CD8-positive, alpha-beta memory T cell (primary cell): ENCODE measurements at regions of chr17 and their contacts with region 1.

Region 1: GRCh38 chr17:40542558-40543411 is 22.5 kb downstream of the CCR7 start:
- DNase-seq: peak in 3 of 5 donors; percentile 33 to 64 (median 44)
- H3K4me3 ChIP-seq: peak overlapping the region; percentile 54
- H3K4me3 Mint-ChIP-seq: peak overlapping the region; percentile 77 to 86 (median 84)
- H3K27ac ChIP-seq: peak overlapping the region; percentile 72
- H3K27ac Mint-ChIP-seq: peak overlapping the region; percentile 95 to 100 (median 98)
- H3K4me1 ChIP-seq: peaks cover 92% of the 10 kb centered on the region
- H3K4me1 Mint-ChIP-seq: peaks cover 82 to 93% (median 89%) of the 10 kb centered on the region in 3 donors
- H3K27me3 ChIP-seq: no peaks in the 10 kb centered on the region
- H3K27me3 Mint-ChIP-seq: peaks cover 0 to 10% of the 10 kb centered on the region in 2 donors

Region 2: DNA sequence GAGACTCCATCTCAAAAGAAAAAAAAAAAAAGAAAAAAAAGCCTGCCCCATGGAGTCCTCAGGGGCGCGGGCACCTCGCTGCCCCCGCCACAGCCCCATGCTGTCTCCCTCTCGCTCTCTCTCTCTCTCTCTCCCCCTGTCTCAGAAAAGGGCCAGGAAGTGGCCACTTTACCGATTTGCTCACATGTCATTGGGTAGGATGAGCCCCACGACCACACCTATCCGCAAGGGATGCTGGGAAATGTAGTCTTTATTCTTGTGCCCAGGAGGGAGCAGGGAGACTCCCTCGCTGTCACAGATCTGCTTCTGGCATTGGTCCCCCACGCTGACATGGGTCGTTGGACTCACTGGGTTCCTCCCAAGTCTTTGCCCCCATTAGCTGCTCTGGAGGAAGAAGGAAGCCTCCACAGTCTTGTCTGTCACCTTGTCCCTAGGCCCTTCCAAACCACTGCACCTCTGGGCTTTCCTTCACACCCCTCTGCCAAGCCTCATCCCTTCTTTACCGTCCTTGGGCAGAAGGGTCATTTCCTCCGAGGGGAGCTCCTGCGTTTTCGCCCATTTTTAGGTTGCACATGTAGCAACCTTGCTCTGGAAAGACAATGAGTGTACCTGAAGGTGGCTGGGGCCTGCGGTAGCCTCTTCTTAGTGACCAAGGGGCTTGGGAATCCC is 171.4 kb before region 1 on chr17:
- CTCF ChIA-PET with region 1: no interaction called
- POLR2A ChIA-PET with region 1: no interaction called
- DNase-seq: peak in 2 of 5 donors; percentile 28 to 40
- H3K4me3 ChIP-seq: no peak overlapping the region
- H3K4me3 Mint-ChIP-seq: peak overlapping the region in 2 of 7 donors; percentile 16 to 43
- H3K27ac ChIP-seq: no peak overlapping the region
- H3K27ac Mint-ChIP-seq: peak overlapping the region in 2 of 8 donors; percentile 68 to 75
- H3K4me1 ChIP-seq: no peaks in the 10 kb centered on the region
- H3K4me1 Mint-ChIP-seq: peaks cover 3 to 6% (median 4%) of the 10 kb centered on the region in 3 donors
- H3K27me3 ChIP-seq: no peaks in the 10 kb centered on the region
- H3K27me3 Mint-ChIP-seq: peaks cover under 1 to 4% of the 10 kb centered on the region in 2 donors

Region 3: GRCh38 chr17:40474419-40475002 is 68.3 kb before region 1 on chr17:
- CTCF ChIA-PET with region 1: interaction called, 11 read pairs
- POLR2A ChIA-PET with region 1: no interaction called
- DNase-seq: no peak
- H3K4me3 ChIP-seq: no peak overlapping the region
- H3K4me3 Mint-ChIP-seq: no peak overlapping the region
- H3K27ac ChIP-seq: no peak overlapping the region
- H3K27ac Mint-ChIP-seq: peak overlapping the region in 2 of 8 donors; percentile 21 to 27
- H3K4me1 ChIP-seq: peaks cover 32% of the 10 kb centered on the region
- H3K4me1 Mint-ChIP-seq: peaks cover 16 to 32% (median 27%) of the 10 kb centered on the region in 3 donors
- H3K27me3 ChIP-seq: no peaks in the 10 kb centered on the region
- H3K27me3 Mint-ChIP-seq: peaks cover 0 to 1% of the 10 kb centered on the region in 2 donors

Region 4: DNA sequence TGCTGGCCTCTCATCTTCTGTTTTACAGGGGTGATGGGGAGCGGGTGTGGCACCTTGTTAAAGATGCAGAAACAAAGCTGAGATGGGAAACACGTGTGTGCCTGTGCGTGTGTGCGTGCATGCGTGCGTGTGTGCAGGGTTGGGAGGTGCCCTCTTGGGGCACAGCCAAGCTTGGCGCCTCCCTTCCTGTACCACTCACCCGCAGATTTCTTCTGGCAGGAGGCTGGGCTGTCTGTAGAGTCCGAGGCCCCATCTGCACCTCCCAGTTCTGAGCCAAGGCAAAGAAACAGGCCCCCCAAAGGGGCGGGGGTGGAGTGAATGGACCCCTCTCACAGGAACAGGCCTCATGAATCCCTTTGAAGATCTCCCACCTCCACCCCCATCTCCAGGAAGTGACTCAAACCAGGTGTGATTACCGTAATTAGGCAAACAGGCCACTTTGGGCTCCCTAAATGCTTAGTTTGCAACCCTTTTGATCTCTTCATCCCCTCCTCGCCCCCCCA is 62.2 kb before region 1 on chr17:
- CTCF ChIA-PET with region 1: interaction called, 11 read pairs
- POLR2A ChIA-PET with region 1: interaction called, 12 read pairs
- DNase-seq: peak; percentile 76 to 96 (median 91)
- H3K4me3 ChIP-seq: no peak overlapping the region
- H3K4me3 Mint-ChIP-seq: peak overlapping the region; percentile 45 to 85 (median 62)
- H3K27ac ChIP-seq: peak overlapping the region; percentile 67
- H3K27ac Mint-ChIP-seq: peak overlapping the region; percentile 89 to 100 (median 99)
- H3K4me1 ChIP-seq: peaks cover 61% of the 10 kb centered on the region
- H3K4me1 Mint-ChIP-seq: peaks cover 64 to 86% (median 82%) of the 10 kb centered on the region in 3 donors
- H3K27me3 ChIP-seq: no peaks in the 10 kb centered on the region
- H3K27me3 Mint-ChIP-seq: peaks cover 0 to 1% of the 10 kb centered on the region in 2 donors